ENCODE measurements at regions of chr7 and their contacts with region 1.

Region 1: DNA sequence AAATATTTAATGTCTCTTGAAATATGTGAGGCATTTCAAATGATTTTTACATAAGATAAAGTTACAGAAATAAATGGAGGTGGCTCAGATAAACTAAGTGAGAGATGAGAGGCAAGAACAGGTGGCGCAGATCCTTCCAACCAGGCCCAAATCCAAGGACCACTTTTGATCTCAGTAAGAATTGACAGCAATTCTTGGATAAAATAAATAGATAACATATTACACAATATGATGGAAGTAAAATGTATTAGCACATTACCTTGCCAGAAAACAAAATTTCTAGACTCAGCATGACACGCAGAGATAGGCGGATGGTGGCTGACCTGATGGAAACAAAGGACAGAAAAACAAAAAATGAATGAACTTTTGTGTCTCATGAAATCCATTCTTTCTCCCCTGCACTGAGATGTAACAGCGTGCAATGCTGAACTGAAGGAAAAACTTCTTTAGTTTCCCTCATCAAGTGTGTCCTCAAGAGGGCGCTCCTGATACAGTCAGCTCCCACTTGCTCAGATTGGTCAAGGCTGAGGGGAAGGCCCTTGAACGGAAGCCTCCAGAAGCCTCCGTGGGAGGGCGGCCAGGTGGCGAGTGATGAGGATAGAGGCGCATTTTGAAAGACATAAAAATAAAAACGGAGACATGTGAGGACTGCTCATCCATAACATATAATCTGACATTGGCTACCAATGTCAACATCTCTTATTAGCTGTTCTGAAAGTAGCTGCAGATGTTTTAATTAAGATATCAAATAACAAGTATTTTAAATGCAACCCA is 62.8 kb upstream of the GSDME start:
- DNase-seq: peak; percentile 45 to 89 (median 62)
- ATAC-seq: peak; percentile 7
- H3K4me3 ChIP-seq: peak overlapping the region; percentile 15
- H3K4me3 Mint-ChIP-seq: peak overlapping the region; percentile 84
- H3K27ac ChIP-seq: peak overlapping the region; percentile 86 to 87
- H3K27ac Mint-ChIP-seq: peak overlapping the region; percentile 97
- H3K4me1 ChIP-seq: peaks cover 34% of the 10 kb centered on the region
- H3K4me1 Mint-ChIP-seq: peaks cover 38% of the 10 kb centered on the region
- H3K27me3 ChIP-seq: no peaks in the 10 kb centered on the region
- H3K27me3 Mint-ChIP-seq: no peaks in the 10 kb centered on the region
- CTCF ChIP-seq: peak; percentile 95

Region 2: GRCh38 chr7:24836084-24836483 is 16.0 kb after region 1 on chr7:
- CTCF ChIA-PET with region 1: interaction called, 5 read pairs
- POLR2A ChIA-PET with region 1: interaction called, 10 read pairs
- intact Hi-C with region 1: no loop called
- DNase-seq: peak in 3 of 14 experiments; percentile 29 to 64 (median 30)
- ATAC-seq: peak; percentile 56
- H3K4me3 ChIP-seq: no peak overlapping the region
- H3K4me3 Mint-ChIP-seq: no peak overlapping the region
- H3K27ac ChIP-seq: no peak overlapping the region
- H3K27ac Mint-ChIP-seq: peak overlapping the region; percentile 2
- H3K4me1 ChIP-seq: peaks cover 14% of the 10 kb centered on the region
- H3K4me1 Mint-ChIP-seq: peaks cover 23% of the 10 kb centered on the region
- H3K27me3 ChIP-seq: no peaks in the 10 kb centered on the region
- H3K27me3 Mint-ChIP-seq: no peaks in the 10 kb centered on the region
- CTCF ChIP-seq: no peak

Region 3: GRCh38 chr7:25028370-25029021 is 208.4 kb after region 1 on chr7:
- CTCF ChIA-PET with region 1: interaction called, 7 read pairs
- POLR2A ChIA-PET with region 1: interaction called, 22 read pairs
- intact Hi-C with region 1: loop called in 1 of 2 experiments (anchors 1 kb)
- DNase-seq: peak in 6 of 14 experiments; percentile 2 to 84 (median 38)
- ATAC-seq: peak; percentile 85
- H3K4me3 ChIP-seq: no peak overlapping the region
- H3K4me3 Mint-ChIP-seq: peak overlapping the region; percentile 23
- H3K27ac ChIP-seq: peak overlapping the region; percentile 29 to 73
- H3K27ac Mint-ChIP-seq: peak overlapping the region; percentile 85
- H3K4me1 ChIP-seq: peaks cover 45% of the 10 kb centered on the region
- H3K4me1 Mint-ChIP-seq: peaks cover 48% of the 10 kb centered on the region
- H3K27me3 ChIP-seq: no peaks in the 10 kb centered on the region
- H3K27me3 Mint-ChIP-seq: no peaks in the 10 kb centered on the region
- CTCF ChIP-seq: no peak

Region 4: GRCh38 chr7:25093268-25093826 is 273.2 kb after region 1 on chr7:
- CTCF ChIA-PET with region 1: interaction called, 28 read pairs
- POLR2A ChIA-PET with region 1: interaction called, 5 read pairs
- intact Hi-C with region 1: loop called in 1 of 2 experiments (anchors 1 kb)
- DNase-seq: peak; percentile 59 to 82 (median 70)
- ATAC-seq: peak; percentile 80
- H3K4me3 ChIP-seq: no peak overlapping the region
- H3K4me3 Mint-ChIP-seq: no peak overlapping the region
- H3K27ac ChIP-seq: no peak overlapping the region
- H3K27ac Mint-ChIP-seq: no peak overlapping the region
- H3K4me1 ChIP-seq: peaks cover 9% of the 10 kb centered on the region
- H3K4me1 Mint-ChIP-seq: peaks cover 12% of the 10 kb centered on the region
- H3K27me3 ChIP-seq: no peaks in the 10 kb centered on the region
- H3K27me3 Mint-ChIP-seq: peaks cover 4% of the 10 kb centered on the region
- CTCF ChIP-seq: peak; percentile 93

Region 5: DNA sequence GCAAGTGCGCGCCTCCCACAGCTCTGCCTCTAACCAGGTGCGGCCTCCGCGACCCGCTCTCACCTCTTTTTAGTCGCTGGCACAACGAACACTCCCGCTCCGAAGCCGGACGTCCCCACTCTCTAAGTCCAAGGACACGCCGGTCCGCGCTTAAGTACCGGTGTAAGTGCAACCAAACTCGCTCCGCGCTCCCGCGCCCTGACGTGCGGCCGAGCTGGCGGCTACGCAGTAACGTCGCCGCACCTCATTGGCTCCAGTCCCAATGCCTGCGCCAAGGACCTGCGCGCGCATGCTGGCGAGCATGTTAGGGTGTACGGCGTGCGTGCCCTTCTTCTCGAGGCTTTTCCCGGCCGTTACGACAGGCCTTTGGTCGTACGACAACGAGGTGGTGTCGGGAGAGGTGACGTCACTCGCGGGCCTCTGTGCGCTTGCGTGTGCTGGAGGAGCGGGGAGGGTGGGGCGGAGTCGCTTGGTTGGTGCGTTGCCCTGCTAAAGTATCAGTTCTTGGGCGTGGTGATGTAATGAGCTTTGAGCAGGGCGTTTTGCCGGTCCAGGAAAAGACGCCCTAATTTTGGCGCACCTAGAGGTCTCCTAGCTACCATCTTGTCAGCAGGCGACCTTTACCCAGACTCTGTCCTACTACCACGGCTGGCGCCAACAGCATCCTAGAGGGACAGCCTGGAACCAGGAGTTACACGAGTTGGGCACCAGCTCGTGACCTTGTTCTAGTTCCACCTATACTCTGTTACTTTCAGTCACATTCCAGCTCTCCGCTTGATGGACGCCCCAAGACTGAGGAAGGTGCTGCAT is 305.2 kb after region 1 on chr7 and contains the start of gene CYCS:
- CTCF ChIA-PET with region 1: interaction called, 6 read pairs
- POLR2A ChIA-PET with region 1: interaction called, 18 read pairs
- intact Hi-C with region 1: loop called in 1 of 2 experiments (anchors 1 kb)
- DNase-seq: peak; percentile 99 to 100 (median 99)
- ATAC-seq: peak; percentile 90
- H3K4me3 ChIP-seq: peak within 1 kb of the TSS; percentile 92
- H3K4me3 Mint-ChIP-seq: peak within 1 kb of the TSS; percentile 99
- H3K27ac ChIP-seq: peak within 1 kb of the TSS; percentile 92 to 94
- H3K27ac Mint-ChIP-seq: peak within 1 kb of the TSS; percentile 99
- H3K4me1 ChIP-seq: peaks cover 14% of the 10 kb centered on the region
- H3K4me1 Mint-ChIP-seq: peaks cover 40% of the 10 kb centered on the region
- H3K27me3 ChIP-seq: no peaks in the 10 kb centered on the region
- H3K27me3 Mint-ChIP-seq: no peaks in the 10 kb centered on the region
- CTCF ChIP-seq: no peak
- total RNA-seq, gene CYCS: 126 to 131 TPM

Region 6: GRCh38 chr7:25196132-25196891 is 376.2 kb after region 1 on chr7:
- CTCF ChIA-PET with region 1: no interaction called
- POLR2A ChIA-PET with region 1: no interaction called
- intact Hi-C with region 1: no loop called
- DNase-seq: no peak
- ATAC-seq: no peak
- H3K4me3 ChIP-seq: no peak overlapping the region
- H3K4me3 Mint-ChIP-seq: no peak overlapping the region
- H3K27ac ChIP-seq: no peak overlapping the region
- H3K27ac Mint-ChIP-seq: no peak overlapping the region
- H3K4me1 ChIP-seq: no peaks in the 10 kb centered on the region
- H3K4me1 Mint-ChIP-seq: no peaks in the 10 kb centered on the region
- H3K27me3 ChIP-seq: peaks cover 4 to 6% of the 10 kb centered on the region in 2 experiments
- H3K27me3 Mint-ChIP-seq: peaks cover 5% of the 10 kb centered on the region
- CTCF ChIP-seq: no peak